ENCODE measurements at regions of chr2 and their contacts with region 1.

Region 1: GRCh38 chr2:58553937-58554336 is 312.8 kb upstream of the FANCL start:
- DNase-seq: peak in 2 of 4 experiments; percentile 9 to 32
- ATAC-seq: peak; percentile 87
- H3K4me3 ChIP-seq: no peak overlapping the region
- H3K27ac ChIP-seq: no peak overlapping the region
- H3K4me1 ChIP-seq: no peaks in the 10 kb centered on the region
- H3K27me3 ChIP-seq: no peaks in the 10 kb centered on the region
- CTCF ChIP-seq: peak; percentile 50 to 71 (median 56)
- EP300 ChIP-seq: no peak
- POLR2A ChIP-seq: no peak
- RAD21 ChIP-seq: peak; percentile 43 to 72

Region 2: GRCh38 chr2:57759822-57760300 is 794.1 kb before region 1 on chr2:
- CTCF ChIA-PET with region 1: interaction called, 3 read pairs
- POLR2A ChIA-PET with region 1: no interaction called
- in situ Hi-C with region 1: no loop called
- intact Hi-C with region 1: loop called (anchors 5 kb)
- DNase-seq: peak; percentile 80 to 85 (median 83)
- ATAC-seq: peak; percentile 99
- H3K4me3 ChIP-seq: no peak overlapping the region
- H3K27ac ChIP-seq: no peak overlapping the region
- H3K4me1 ChIP-seq: peaks cover 0 to 4% of the 10 kb centered on the region in 2 experiments; a peak in 3 of 5 replicates
- H3K27me3 ChIP-seq: no peaks in the 10 kb centered on the region
- CTCF ChIP-seq: peak; percentile 88 to 92 (median 90)
- EP300 ChIP-seq: no peak
- POLR2A ChIP-seq: no peak
- RAD21 ChIP-seq: peak; percentile 82 to 90

Region 3: GRCh38 chr2:58221909-58222308 is 332.0 kb before region 1 on chr2:
- CTCF ChIA-PET with region 1: no interaction called
- POLR2A ChIA-PET with region 1: no interaction called
- in situ Hi-C with region 1: no loop called
- intact Hi-C with region 1: no loop called
- DNase-seq: no peak
- ATAC-seq: no peak
- H3K4me3 ChIP-seq: no peak overlapping the region
- H3K27ac ChIP-seq: no peak overlapping the region
- H3K4me1 ChIP-seq: no peaks in the 10 kb centered on the region
- H3K27me3 ChIP-seq: no peaks in the 10 kb centered on the region
- CTCF ChIP-seq: no peak
- EP300 ChIP-seq: no peak
- POLR2A ChIP-seq: no peak
- RAD21 ChIP-seq: no peak

Measured in K562 (cell line).